Posterior vena cava (tissue), 2 donors: ENCODE measurements at regions of chr19 and their contacts with region 1.

Region 1: GRCh38 chr19:23015713-23016112 is 12.7 kb upstream of the ZNF728 start:
- DNase-seq: no peak

Region 2: DNA sequence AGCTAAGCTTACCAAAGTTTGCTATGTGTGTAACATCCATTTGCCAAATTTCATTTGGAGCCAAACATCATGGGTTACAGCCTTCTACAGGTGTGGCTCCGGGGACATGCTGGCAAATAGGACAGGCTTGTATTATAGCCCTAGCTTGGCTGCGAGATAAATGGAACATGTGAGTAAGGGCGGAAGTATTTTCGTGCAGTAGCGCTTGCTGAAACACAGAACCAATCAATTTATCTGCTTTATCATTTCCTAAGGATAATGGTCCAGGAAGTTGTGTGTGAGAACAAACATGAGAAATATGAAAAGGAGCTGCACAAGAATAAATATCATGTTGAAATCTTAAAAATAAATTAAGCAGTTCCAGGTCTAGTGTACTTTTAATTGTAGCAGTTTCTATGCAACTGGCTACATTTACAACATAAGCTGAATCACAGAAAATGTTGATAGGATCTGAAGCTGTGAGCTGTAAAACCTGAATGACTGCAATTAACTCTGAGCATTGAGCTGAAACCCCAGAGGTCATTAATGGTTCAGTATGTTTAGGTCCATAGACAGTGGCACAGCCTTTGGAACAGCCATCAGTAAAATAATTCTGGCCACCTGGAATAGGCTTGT is 1226.1 kb before region 1 on chr19:
- intact Hi-C with region 1: loop called in 1 of 2 experiments (anchors 5 kb)
- DNase-seq: no peak